Colonic mucosa (tissue), 4 donors: ENCODE measurements at regions of chr19 and their contacts with region 1.

Region 1: GRCh38 chr19:51367565-51368365 is 1.0 kb downstream of the CLDND2 start:
- DNase-seq: peak; percentile 100
- H3K4me3 ChIP-seq: peak overlapping the region; percentile 76
- H3K27ac ChIP-seq: peak overlapping the region; percentile 91
- H3K4me1 ChIP-seq: peaks cover 10% of the 10 kb centered on the region
- H3K27me3 ChIP-seq: no peaks in the 10 kb centered on the region
- CTCF ChIP-seq: no peak

Region 2: DNA sequence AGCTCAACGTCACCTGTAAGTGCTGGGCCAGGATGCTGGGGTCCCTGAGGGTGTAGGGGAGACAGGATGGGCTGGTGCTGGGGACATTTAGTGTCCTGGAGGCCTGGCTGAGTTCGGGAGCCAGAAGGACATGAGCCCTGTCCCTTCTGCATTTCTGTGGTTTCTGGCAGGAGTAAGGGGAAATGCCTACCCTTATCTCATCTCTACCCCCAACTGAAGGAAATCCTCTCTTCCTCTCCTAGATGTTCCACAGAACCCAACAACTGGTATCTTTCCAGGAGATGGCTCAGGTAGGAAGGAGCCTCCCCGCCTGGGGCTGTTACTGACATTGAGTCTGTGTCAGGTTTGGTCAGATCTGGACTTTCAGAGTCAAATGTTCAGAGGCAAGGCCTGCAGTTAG is 141.7 kb before region 1 on chr19:
- intact Hi-C with region 1: no loop called
- DNase-seq: no peak
- H3K4me3 ChIP-seq: no peak overlapping the region
- H3K27ac ChIP-seq: no peak overlapping the region
- H3K4me1 ChIP-seq: no peaks in the 10 kb centered on the region
- H3K27me3 ChIP-seq: no peaks in the 10 kb centered on the region
- CTCF ChIP-seq: no peak

Region 3: DNA sequence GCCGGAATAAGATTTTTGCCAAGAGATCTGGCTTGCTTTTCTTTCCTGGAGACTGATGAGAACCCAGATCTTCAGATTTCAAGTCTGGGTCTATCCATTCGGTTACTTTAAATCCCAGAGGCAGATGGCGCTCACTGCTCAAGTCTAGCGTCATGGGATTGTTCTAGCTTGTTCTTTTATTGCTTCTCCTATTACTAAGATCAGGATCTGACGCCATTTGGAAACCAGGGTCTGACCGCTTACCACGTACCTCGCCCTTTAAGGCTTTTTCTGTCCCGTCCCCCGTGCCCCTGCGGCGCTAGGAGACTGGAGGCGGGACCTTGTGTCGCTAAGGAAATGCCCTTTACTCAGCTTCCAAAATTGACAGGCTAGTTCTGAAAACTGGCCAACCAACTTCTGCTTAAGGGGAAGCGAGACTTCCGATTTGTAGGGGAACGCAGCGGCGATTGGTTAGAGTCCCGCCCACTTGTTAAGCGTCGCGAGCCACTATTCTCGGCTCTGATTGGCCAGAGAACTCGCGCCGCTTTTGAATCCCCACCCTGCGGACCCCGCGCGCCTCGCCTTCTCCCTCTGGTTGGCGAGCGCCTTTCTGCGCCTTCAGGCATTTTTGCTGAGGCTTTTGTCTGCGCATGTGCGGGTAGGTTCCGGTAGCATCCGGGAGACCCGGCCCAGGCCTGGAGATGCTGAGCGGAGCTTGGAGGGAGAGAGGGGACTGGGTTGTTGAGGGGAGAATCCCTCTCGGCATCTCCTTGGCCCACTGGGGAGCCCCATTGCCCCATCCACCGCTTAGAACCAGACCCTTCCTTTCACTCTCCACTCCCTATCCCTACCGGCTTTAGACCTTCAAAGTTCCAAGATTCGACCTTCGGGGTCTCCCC is 26.4 kb after region 1 on chr19:
- intact Hi-C with region 1: loop called (anchors 2 kb)
- DNase-seq: peak; percentile 96
- H3K4me3 ChIP-seq: peak overlapping the region; percentile 38
- H3K27ac ChIP-seq: peak overlapping the region; percentile 72
- H3K4me1 ChIP-seq: peaks cover 6% of the 10 kb centered on the region
- H3K27me3 ChIP-seq: no peaks in the 10 kb centered on the region
- CTCF ChIP-seq: no peak

Region 4: GRCh38 chr19:51552996-51553725 is 185.4 kb after region 1 on chr19:
- intact Hi-C with region 1: no loop called
- DNase-seq: peak; percentile 63
- H3K4me3 ChIP-seq: no peak overlapping the region
- H3K27ac ChIP-seq: no peak overlapping the region
- H3K4me1 ChIP-seq: no peaks in the 10 kb centered on the region
- H3K27me3 ChIP-seq: no peaks in the 10 kb centered on the region
- CTCF ChIP-seq: no peak